ENCODE measurements at regions of chrX and their contacts with region 1.

Region 1: GRCh38 chrX:130268500-130269170 is at the start of gene ZNF280C:
- DNase-seq: peak; percentile 96
- ATAC-seq: peak; percentile 98
- H3K4me3 Mint-ChIP-seq: peak within 1 kb of the TSS; percentile 85
- H3K27ac Mint-ChIP-seq: peak within 1 kb of the TSS; percentile 83
- H3K4me1 Mint-ChIP-seq: peaks cover 19% of the 10 kb centered on the region
- H3K27me3 Mint-ChIP-seq: no peaks in the 10 kb centered on the region
- total RNA-seq, gene ZNF280C: 5.9 to 8.6 TPM

Region 2: GRCh38 chrX:129843459-129844306 is 425.0 kb before region 1 on chrX and contains the start of gene ZDHHC9:
- CTCF ChIA-PET with region 1: no interaction called
- POLR2A ChIA-PET with region 1: no interaction called
- intact Hi-C with region 1: loop called in 1 of 2 experiments (anchors 5 kb)
- DNase-seq: peak; percentile 92
- ATAC-seq: peak; percentile 97
- H3K4me3 Mint-ChIP-seq: peak within 1 kb of the TSS; percentile 77
- H3K27ac Mint-ChIP-seq: peak within 1 kb of the TSS; percentile 75
- H3K4me1 Mint-ChIP-seq: peaks cover 32% of the 10 kb centered on the region
- H3K27me3 Mint-ChIP-seq: no peaks in the 10 kb centered on the region
- total RNA-seq, gene ZDHHC9: 12.5 to 14.2 TPM

Region 3: GRCh38 chrX:130086447-130087206 is 182.0 kb before region 1 on chrX:
- CTCF ChIA-PET with region 1: no interaction called
- POLR2A ChIA-PET with region 1: no interaction called
- intact Hi-C with region 1: loop called (anchors 5 kb)
- DNase-seq: peak; percentile 85
- ATAC-seq: peak; percentile 53
- H3K4me3 Mint-ChIP-seq: peak overlapping the region; percentile 74
- H3K27ac Mint-ChIP-seq: peak overlapping the region; percentile 94
- H3K4me1 Mint-ChIP-seq: peaks cover 82% of the 10 kb centered on the region
- H3K27me3 Mint-ChIP-seq: no peaks in the 10 kb centered on the region

Region 4: GRCh38 chrX:130165703-130166502 is 102.7 kb before region 1 on chrX and contains the start of gene AIFM1:
- CTCF ChIA-PET with region 1: interaction called, 3 read pairs
- POLR2A ChIA-PET with region 1: no interaction called
- intact Hi-C with region 1: loop called in 1 of 2 experiments (anchors 1 kb)
- DNase-seq: peak; percentile 92
- ATAC-seq: peak; percentile 95
- H3K4me3 Mint-ChIP-seq: peak within 1 kb of the TSS; percentile 86
- H3K27ac Mint-ChIP-seq: peak within 1 kb of the TSS; percentile 89
- H3K4me1 Mint-ChIP-seq: peaks cover 37% of the 10 kb centered on the region
- H3K27me3 Mint-ChIP-seq: no peaks in the 10 kb centered on the region
- total RNA-seq, gene AIFM1: 48.8 to 61.7 TPM

Region 5: DNA sequence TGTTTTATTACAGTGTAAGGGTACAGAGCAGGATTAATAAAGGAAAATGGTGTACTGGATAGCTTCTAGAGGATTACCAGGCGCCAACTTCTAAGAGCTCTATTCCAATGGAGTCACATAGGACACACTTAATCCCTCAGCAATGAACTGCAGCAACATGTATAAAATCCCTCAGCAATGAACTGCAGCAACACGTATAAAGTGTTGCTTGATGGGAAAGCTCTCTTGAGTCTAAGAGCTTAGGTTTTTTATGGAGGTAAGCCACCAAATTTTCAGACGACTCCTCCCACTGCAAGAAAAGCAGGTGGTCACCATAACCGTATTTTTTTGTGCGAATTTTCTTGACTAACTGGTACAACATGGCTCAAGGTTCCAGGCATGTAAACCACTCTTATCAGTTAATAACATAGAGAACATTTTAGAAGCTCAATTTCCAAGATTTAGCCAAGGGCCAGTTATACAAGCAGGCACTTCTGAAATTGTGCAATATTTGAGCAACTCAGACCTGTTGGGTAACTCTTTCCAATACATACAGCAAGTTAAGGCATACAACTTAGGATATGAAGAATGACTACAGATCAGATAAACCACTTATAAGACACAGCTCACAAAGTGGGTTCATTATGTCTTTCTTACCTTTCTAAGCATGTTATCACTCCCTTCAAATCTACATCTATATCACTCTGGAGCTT is 44.0 kb before region 1 on chrX:
- CTCF ChIA-PET with region 1: no interaction called
- POLR2A ChIA-PET with region 1: no interaction called
- intact Hi-C with region 1: no loop called
- DNase-seq: no peak
- ATAC-seq: no peak
- H3K4me3 Mint-ChIP-seq: no peak overlapping the region
- H3K27ac Mint-ChIP-seq: no peak overlapping the region
- H3K4me1 Mint-ChIP-seq: peaks cover 1% of the 10 kb centered on the region
- H3K27me3 Mint-ChIP-seq: no peaks in the 10 kb centered on the region

Region 6: DNA sequence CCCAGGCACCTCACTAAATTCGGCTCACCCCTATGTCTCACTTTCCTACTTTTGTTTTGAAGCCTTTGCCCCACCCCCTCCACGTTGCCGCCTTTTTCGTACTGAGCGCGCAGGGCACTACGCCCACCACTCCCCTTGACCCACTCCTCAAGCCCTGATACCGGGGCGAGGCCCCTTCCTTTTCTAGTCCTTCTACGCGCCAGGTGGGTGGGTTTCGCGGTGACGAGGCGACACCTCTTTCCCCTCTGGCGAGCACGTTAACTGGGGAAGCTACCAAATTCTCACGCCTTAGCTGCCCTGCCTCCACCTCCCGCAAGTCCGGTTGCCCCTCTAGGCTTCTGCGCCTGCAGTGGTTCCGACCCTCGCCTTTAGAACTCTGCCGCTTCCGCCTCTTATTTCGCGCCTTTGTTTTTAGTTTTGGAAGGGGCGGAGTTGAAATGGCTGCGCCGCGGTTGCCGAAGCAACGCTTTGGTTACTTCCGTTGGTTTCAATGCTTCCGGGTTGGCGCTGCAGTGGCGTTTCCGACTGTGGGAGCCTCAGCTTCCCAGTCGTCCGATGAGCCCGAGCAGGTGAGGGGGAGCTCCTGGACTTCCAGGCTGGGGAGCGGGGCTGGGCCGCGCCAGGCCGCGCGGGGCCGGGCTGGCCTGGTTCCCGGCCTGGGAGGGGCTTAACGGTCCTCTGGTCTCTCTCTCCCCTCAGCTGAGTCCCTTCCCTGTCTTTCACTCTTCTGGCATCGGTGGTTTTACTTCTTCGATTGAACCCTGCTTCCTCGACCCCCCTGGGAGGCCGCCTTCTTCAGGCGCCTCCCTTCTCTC is 71.0 kb after region 1 on chrX and contains the start of gene SLC25A14:
- CTCF ChIA-PET with region 1: no interaction called
- POLR2A ChIA-PET with region 1: no interaction called
- intact Hi-C with region 1: loop called (anchors 1 to 2 kb)
- DNase-seq: peak; percentile 82
- ATAC-seq: peak; percentile 88
- H3K4me3 Mint-ChIP-seq: peak within 1 kb of the TSS; percentile 87
- H3K27ac Mint-ChIP-seq: peak within 1 kb of the TSS; percentile 94
- H3K4me1 Mint-ChIP-seq: peaks cover 14% of the 10 kb centered on the region
- H3K27me3 Mint-ChIP-seq: no peaks in the 10 kb centered on the region
- total RNA-seq, gene SLC25A14: 9.6 to 11.0 TPM

Region 7: GRCh38 chrX:130413415-130413814 is 144.8 kb after region 1 on chrX:
- CTCF ChIA-PET with region 1: no interaction called
- POLR2A ChIA-PET with region 1: no interaction called
- intact Hi-C with region 1: no loop called
- DNase-seq: no peak
- ATAC-seq: no peak
- H3K4me3 Mint-ChIP-seq: no peak overlapping the region
- H3K27ac Mint-ChIP-seq: no peak overlapping the region
- H3K4me1 Mint-ChIP-seq: no peaks in the 10 kb centered on the region
- H3K27me3 Mint-ChIP-seq: no peaks in the 10 kb centered on the region

Region 8: DNA sequence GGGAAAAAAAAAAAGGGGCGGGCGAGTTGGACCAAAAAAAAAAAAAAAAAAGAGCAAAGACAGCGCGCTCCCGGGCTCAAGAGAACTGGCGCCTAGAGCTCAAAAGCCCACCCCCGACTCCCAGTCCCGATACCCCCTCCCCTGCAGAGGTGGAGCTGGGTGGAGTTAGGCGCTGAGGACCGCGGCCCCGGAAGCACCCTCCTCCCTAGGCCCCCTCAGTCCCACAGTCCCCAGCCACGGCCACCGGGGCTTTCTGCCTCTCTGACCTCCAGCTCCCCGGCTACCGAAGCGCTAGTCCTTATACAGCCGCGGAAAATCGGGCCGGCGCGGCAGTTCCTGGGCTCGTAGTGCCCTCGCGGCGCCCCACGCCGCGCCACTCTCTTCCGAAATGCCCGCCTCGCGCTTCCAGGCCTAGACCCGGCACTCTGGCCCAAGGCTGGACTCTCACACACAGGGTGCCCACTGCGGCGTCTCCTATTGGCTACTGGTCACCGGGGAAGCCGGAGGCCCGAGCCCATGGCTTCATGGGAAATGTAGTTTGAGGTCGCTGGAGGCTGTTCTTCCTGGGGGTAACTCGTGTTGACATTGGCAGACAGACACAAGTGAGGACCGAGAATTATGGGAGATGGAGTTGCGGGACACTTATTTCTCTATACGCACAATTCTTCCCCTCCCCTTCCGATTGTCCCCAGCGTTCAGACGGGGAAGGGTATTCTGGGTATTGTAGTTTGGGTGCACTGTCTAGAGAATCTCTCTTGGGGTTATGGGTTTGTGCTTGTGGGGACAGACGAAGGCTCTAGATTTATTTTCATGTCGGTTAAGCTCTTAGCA is 634.4 kb after region 1 on chrX and contains the start of gene ENOX2:
- CTCF ChIA-PET with region 1: no interaction called
- POLR2A ChIA-PET with region 1: no interaction called
- intact Hi-C with region 1: loop called in 1 of 2 experiments (anchors 1 kb)
- DNase-seq: peak; percentile 86
- ATAC-seq: peak; percentile 98
- H3K4me3 Mint-ChIP-seq: no peak within 1 kb of the TSS
- H3K27ac Mint-ChIP-seq: peak within 1 kb of the TSS; percentile 80
- H3K4me1 Mint-ChIP-seq: peaks cover 5% of the 10 kb centered on the region
- H3K27me3 Mint-ChIP-seq: peaks cover 2% of the 10 kb centered on the region
- total RNA-seq, gene ENOX2: 12.5 to 16.5 TPM

Measured in activated CD4-positive, alpha-beta T cell treated with anti-CD3 and anti-CD28 coated beads for 36 hours (primary cell).